Dendritic cell treated with granulocyte-macrophage colony-stimulating factor and Interleukin-4, amounts not matched to agents 40 ng/mL and 50 ng/mL, for 4 days (primary cell): ENCODE measurements at regions of chr2 and their contacts with region 1.

Region 1: DNA sequence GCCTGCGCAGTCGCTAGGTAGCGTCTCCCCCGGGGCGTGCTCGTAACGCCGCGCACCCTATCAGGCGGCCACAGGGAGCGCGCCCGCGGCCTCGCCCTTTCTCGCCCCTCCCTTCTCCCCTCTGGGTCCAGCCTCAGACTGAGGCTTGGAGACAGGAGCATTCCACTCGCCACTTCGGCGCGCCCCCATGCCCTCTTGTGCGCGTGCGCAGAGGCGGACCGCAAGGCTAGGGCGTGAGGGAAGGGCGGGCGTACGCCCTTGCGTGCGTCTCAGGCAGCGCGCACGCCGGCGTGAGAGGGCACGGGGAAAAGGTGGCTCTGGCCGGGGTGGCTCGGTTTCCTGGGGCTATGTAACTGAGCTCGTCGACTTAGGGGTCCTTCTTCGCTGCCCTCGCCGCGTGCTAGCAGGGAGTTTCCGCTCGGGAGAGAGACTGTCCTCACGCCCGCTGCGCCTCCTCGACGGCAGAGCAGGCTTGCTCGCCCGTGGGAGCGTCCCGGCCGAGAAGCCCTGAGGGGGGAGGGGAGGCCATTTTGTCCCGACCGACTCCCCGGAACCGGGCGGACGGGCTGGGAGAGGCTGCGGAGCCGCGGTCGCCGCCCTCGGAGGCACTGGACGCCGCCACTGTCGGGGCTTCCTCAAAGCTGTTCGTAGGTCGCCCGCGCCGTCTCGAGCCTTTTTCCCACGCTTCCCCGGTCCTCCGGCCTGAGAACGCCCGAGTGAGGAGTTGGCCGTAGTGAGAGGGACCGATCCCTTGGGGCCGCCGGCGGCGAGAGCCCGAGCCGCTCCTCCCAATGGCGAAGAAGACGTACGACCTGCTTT is at the start of gene RAB10:
- H3K4me3 Mint-ChIP-seq: peak within 1 kb of the TSS; percentile 93
- H3K27ac Mint-ChIP-seq: peak within 1 kb of the TSS; percentile 93
- H3K4me1 Mint-ChIP-seq: peaks cover 40% of the 10 kb centered on the region
- H3K27me3 Mint-ChIP-seq: no peaks in the 10 kb centered on the region

Region 2: DNA sequence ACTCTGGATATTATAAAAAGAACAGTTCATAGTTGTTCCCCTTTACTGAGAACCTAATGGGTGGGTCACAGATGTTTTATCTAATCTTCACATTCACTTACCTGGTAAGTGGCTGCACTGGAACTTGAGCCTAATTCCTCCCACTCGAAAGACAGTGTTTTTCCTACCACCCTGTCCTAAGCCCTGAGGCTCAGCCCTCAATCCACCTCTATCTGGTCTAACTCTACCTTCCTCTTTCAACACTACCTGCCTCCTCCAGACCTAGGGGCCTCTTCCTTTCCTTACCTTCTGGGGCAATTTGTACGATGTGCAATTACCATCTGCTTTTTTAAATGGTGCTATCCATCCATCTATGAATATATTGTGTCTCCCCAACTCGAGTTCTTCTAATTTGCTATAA is 42.1 kb before region 1 on chr2:
- intact Hi-C with region 1: loop called (anchors 2 kb)
- H3K4me3 Mint-ChIP-seq: no peak overlapping the region
- H3K27ac Mint-ChIP-seq: no peak overlapping the region
- H3K4me1 Mint-ChIP-seq: peaks cover 16% of the 10 kb centered on the region
- H3K27me3 Mint-ChIP-seq: no peaks in the 10 kb centered on the region

Region 3: DNA sequence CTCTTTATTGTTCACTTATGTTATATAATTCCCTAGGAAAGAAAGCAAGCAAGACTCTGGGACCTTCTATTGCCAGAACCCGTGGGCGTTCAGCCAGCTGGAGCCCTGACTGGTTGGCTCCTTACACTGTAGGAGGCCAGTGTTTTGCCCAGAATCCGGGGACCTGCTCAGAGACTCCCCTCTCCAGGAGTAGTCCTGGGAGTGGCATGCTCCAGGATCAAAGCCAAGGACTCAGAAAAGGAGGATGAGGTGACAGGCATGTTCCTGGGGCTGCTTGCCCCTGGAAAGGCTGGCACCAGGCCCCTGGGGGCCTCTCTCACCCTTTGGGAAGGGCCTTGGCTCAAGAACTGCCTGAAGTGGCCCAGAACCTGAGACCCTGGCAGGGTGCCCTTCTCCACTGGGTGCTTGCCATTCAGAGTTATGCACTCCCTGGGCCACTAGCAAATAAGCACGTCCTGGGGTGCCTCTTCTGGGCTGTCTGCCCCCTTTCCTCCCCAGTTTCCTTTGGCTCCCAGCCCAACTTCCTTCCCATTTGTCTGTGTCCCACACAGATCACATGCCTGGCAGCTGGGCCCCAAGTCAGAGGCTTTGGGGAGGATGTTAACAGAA is 32.2 kb before region 1 on chr2:
- intact Hi-C with region 1: loop called (anchors 2 kb)
- H3K4me3 Mint-ChIP-seq: peak overlapping the region; percentile 35
- H3K27ac Mint-ChIP-seq: peak overlapping the region; percentile 96
- H3K4me1 Mint-ChIP-seq: peaks cover 86% of the 10 kb centered on the region
- H3K27me3 Mint-ChIP-seq: no peaks in the 10 kb centered on the region

Region 4: DNA sequence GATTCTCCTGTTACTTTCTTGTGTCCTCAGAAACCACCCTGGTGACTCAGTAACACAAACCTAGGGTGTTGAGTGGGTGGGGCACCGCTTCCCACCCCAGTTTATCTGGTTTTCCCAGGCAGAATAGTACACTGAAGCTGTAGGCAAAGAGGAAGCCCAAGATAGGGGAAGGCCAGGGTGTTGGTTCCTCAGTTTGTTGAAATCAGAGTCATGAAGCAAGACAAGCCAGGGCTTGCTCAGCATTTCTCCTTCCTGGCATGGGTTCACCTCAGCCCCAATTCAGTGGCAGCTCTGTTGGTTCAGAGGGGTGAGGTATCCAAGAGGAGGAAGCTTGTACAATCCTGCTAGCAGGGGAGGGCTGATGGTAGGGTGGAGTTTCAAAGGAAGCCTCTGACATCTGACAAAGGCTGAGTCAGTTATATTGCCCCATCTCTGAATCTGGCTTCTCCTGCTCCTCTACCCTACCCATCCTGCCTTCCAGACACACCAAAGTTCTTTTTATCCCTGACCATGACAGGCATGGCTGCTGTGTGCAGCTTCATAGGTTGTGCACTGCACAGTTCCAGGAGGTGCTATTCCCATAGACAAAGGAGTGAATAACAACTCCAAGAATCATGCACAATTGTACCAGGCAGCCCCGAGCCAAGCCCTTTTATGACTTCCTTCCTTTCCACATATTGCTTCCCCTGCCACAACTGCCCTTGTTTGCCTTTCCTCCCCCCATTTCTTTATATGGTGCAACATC is 25.0 kb before region 1 on chr2:
- intact Hi-C with region 1: loop called (anchors 2 kb)
- H3K4me3 Mint-ChIP-seq: peak overlapping the region; percentile 35
- H3K27ac Mint-ChIP-seq: peak overlapping the region; percentile 96
- H3K4me1 Mint-ChIP-seq: peaks cover 83% of the 10 kb centered on the region
- H3K27me3 Mint-ChIP-seq: no peaks in the 10 kb centered on the region